ENCODE measurements at regions of chr17 and their contacts with region 1.

Region 1: GRCh38 chr17:74736513-74737298 is at the start of gene RAB37:
- DNase-seq: peak; percentile 82
- H3K4me3 ChIP-seq: peak within 1 kb of the TSS; percentile 65
- H3K27ac ChIP-seq: peak within 1 kb of the TSS; percentile 54
- H3K4me1 ChIP-seq: peaks cover 42% of the 10 kb centered on the region
- CTCF ChIP-seq: peak; percentile 86
- total RNA-seq, gene RAB37: 2.8 and 6.3 TPM in 2 replicates

Region 2: GRCh38 chr17:74437702-74438101 is 299.0 kb before region 1 on chr17:
- CTCF ChIA-PET with region 1: no interaction called
- POLR2A ChIA-PET with region 1: interaction called, 3 read pairs
- intact Hi-C with region 1: loop called (anchors 5 kb)
- DNase-seq: peak; percentile 69
- H3K4me3 ChIP-seq: no peak overlapping the region
- H3K27ac ChIP-seq: no peak overlapping the region
- H3K4me1 ChIP-seq: peaks cover 6% of the 10 kb centered on the region
- CTCF ChIP-seq: peak; percentile 100

Region 3: GRCh38 chr17:74566132-74566753 is 170.5 kb before region 1 on chr17:
- CTCF ChIA-PET with region 1: no interaction called
- POLR2A ChIA-PET with region 1: no interaction called
- intact Hi-C with region 1: loop called (anchors 1 kb)
- DNase-seq: peak; percentile 63
- H3K4me3 ChIP-seq: no peak overlapping the region
- H3K27ac ChIP-seq: no peak overlapping the region
- H3K4me1 ChIP-seq: no peaks in the 10 kb centered on the region
- CTCF ChIP-seq: peak; percentile 95

Region 4: GRCh38 chr17:74659898-74660297 is 76.8 kb before region 1 on chr17:
- CTCF ChIA-PET with region 1: interaction called, 82 read pairs
- POLR2A ChIA-PET with region 1: interaction called, 8 read pairs
- intact Hi-C with region 1: loop called (anchors 1 kb)
- DNase-seq: no peak
- H3K4me3 ChIP-seq: no peak overlapping the region
- H3K27ac ChIP-seq: no peak overlapping the region
- H3K4me1 ChIP-seq: no peaks in the 10 kb centered on the region
- CTCF ChIP-seq: no peak

Region 5: DNA sequence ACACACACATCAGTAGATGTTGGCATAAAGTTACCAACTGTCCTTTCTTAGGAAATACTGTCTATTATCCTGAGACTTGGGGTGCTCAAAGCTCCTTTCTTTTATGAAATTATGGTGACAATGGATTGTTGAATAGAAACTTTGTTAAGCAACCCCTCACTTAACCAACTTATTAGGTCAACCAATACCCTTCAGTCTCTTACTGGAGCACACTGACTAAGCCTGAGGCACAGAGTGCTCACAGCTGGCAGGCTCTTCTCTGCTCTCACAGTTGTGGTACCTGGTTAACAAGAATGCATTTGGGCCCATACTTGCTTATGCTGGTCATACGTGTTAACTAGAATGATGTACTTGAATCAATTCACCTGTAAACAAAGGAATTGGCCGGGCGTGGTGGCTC is 48.8 kb before region 1 on chr17:
- CTCF ChIA-PET with region 1: interaction called, 5 read pairs
- POLR2A ChIA-PET with region 1: interaction called, 4 read pairs
- intact Hi-C with region 1: loop called (anchors 2 kb)
- DNase-seq: no peak
- H3K4me3 ChIP-seq: no peak overlapping the region
- H3K27ac ChIP-seq: no peak overlapping the region
- H3K4me1 ChIP-seq: peaks cover 29% of the 10 kb centered on the region
- CTCF ChIP-seq: no peak

Region 6: DNA sequence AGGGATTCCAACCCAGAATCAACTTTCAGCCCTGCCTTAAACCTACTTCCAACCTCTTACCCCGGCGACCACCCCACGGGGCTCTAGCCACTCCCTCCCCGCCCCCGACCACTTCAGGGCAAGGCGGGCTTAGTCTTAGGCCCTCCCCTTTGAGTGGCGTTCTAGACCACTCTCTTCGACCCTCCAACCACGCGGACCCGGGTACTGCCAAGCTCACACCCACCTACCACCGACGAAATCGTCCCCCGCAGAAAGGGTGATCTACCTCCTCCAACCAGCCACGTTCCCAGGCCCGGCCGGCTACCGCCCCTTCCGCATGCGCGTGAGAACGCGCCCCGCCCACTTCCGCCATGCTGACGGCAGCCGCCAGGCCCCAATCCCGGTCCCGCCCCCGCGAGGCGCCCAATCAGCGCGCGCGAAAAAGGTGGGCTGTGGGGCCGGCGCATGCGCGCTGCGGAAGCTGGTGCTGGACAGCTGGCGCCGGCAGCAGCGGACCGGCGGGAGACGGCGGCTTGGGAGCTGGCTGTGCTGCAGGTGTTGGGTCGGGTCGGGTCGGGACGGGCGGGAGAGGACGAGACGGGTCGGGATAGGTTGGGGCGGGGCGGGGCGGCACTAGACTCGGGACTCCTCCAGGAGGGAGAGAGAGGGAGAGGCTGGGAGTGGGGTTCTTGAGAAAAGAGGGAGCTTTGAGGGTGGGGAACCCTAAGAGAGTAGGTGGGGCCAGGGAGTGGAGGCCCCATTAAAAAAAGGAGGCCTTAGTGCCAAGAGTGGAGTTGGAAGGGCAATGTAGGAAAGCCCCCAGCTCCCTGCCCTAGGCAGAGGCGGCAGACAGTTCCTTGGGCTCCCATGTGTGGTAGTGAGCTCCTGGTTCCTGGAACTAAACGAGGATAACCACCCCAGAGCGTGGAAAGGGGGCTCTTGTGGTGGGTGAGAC is 39.6 kb after region 1 on chr17 and contains the start of gene NAT9:
- CTCF ChIA-PET with region 1: interaction called, 10 read pairs
- POLR2A ChIA-PET with region 1: interaction called, 19 read pairs
- intact Hi-C with region 1: no loop called
- DNase-seq: peak; percentile 100
- H3K4me3 ChIP-seq: peak within 1 kb of the TSS; percentile 75
- H3K27ac ChIP-seq: peak within 1 kb of the TSS; percentile 32
- H3K4me1 ChIP-seq: peaks cover 26% of the 10 kb centered on the region
- CTCF ChIP-seq: no peak
- total RNA-seq, gene NAT9: 77.2 and 99.3 TPM in 2 replicates

Region 7: GRCh38 chr17:74796866-74797265 is 60.2 kb after region 1 on chr17:
- CTCF ChIA-PET with region 1: no interaction called
- POLR2A ChIA-PET with region 1: no interaction called
- intact Hi-C with region 1: no loop called
- DNase-seq: no peak
- H3K4me3 ChIP-seq: no peak overlapping the region
- H3K27ac ChIP-seq: no peak overlapping the region
- H3K4me1 ChIP-seq: no peaks in the 10 kb centered on the region
- CTCF ChIP-seq: no peak

Region 8: DNA sequence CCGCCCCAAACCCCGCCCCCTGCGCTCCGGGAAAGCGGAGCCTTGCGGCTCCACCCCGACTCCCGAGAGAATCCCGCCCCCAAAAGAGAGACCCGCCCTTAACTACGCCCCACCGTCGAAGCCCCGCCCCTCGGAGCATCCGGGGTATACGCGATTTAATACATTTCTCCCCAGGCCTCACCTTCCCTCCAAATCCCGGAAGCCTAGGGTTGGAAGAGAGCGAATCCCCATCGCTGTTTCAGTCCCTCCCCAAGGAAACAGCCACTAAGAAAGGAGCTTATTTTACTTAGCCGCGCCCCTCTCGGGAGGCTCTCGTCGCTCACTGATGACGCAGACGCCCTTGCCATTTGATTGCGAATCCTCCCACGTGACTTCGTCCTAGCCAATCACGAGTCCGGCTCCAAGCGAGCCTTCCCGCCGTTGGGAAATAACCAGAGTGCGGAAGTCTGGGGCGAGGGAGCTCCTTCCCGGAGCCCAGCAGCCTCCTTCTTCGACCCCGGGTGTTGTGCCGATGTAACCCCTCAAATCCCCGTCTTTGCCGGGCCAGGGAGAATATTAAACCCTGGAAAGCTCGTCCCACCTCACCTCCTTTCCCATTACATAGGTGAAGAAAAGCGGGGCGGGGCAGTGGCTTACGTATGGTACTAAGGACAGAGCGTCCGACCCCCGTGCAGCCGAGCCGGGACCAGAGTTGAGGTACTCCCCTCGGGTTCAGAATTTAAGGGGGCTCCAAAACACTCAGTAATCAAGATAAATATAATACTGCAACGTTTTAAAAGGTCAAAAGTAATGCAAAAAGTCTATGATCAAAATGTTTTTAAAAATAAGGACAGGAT is 136.6 kb after region 1 on chr17:
- CTCF ChIA-PET with region 1: interaction called, 4 read pairs
- POLR2A ChIA-PET with region 1: interaction called, 14 read pairs
- intact Hi-C with region 1: no loop called
- DNase-seq: peak; percentile 100
- H3K4me3 ChIP-seq: peak overlapping the region; percentile 78
- H3K27ac ChIP-seq: peak overlapping the region; percentile 53
- H3K4me1 ChIP-seq: peaks cover 24% of the 10 kb centered on the region
- CTCF ChIP-seq: no peak

Measured in OCI-LY7 (cell line).